Spleen (tissue), 13 donors: ENCODE measurements at regions of chr12 and their contacts with region 1.

Region 1: DNA sequence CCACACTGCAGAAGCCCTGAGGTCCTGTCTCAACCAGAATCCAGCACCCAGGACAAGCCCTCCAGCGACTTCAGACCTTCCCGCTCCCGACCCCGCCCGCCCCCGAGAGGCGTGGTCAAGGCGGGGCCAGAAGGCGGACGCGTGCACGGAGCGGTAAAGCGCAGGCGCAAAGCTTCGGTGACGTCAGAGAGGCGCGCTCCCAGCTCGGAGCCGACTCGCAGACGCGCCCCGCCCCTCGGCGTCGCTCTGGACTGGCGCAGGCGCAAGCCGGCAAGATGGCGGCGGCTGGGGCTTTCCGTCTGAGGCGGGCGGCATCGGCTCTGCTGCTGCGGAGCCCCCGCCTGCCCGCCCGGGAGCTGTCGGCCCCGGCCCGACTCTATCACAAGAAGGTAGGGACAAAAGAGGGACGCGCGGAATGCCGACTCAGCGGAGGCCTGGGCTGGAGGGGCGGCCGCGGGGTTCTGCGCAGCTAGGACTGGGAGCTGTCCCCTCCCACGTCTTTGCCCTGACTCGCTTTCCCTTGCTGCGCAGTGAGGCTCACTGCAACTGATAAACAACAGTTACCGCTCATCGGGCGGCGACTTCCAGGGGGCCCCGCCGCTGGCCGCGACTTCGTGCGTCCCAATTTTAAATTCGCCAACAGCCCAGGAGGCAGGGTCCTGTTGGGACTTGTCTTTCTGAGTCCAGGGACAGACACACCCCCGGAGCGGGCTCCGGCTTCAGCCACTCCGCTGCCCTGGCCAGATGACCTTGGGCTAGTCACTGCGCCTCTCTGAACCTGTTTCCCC is at the start of gene ISCU:
- DNase-seq: peak; percentile 100
- H3K4me3 ChIP-seq: peak within 1 kb of the TSS; percentile 67 to 99 (median 92)
- H3K27ac ChIP-seq: peak within 1 kb of the TSS; percentile 90 to 98 (median 94)
- H3K4me1 ChIP-seq: peaks cover 61 to 89% (median 79%) of the 10 kb centered on the region in 6 donors
- H3K27me3 ChIP-seq: no peaks in the 10 kb centered on the region
- CTCF ChIP-seq: peak in 5 of 11 experiments; percentile 11 to 42 (median 22)
- POLR2A ChIP-seq: peak; percentile 73 to 90 (median 76)
- total RNA-seq, gene ISCU: 98.9 to 220 (median 144) TPM

Region 2: DNA sequence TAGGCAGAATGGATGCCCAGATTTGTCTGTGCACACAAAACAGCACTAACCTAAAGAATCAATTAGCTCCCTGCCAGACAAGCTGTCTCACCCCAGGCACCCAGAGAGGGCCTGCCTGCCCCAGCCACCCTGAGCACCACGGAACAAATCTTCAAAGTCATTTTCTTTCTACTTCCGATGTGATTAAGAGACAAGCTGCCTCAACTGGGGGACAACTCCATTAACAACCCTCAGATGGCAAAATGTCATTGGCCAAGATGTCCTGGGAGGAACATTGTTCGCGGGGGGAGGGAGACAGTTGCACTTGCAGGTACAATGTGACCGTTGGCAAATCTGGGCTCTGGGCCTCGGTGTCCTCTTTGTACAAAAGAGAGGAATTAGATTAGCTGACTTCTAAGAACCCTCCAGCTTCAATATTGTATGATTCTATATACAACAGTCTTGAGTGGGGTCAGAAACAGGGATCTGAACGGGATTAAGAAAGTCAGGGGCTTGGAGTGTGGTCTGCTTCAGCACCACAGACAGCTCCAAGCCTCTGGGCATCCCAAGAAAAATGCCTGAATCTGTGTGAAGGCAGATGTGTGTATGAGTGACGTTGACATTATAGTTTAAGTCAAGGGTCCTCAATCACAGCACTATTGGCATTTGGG is 180.6 kb before region 1 on chr12:
- intact Hi-C with region 1: no loop called
- DNase-seq: no peak
- H3K4me3 ChIP-seq: no peak overlapping the region
- H3K27ac ChIP-seq: no peak overlapping the region
- H3K4me1 ChIP-seq: no peaks in the 10 kb centered on the region
- H3K27me3 ChIP-seq: peaks cover 0 to 16% (median 0%) of the 10 kb centered on the region in 7 donors
- CTCF ChIP-seq: no peak
- POLR2A ChIP-seq: no peak

Region 3: DNA sequence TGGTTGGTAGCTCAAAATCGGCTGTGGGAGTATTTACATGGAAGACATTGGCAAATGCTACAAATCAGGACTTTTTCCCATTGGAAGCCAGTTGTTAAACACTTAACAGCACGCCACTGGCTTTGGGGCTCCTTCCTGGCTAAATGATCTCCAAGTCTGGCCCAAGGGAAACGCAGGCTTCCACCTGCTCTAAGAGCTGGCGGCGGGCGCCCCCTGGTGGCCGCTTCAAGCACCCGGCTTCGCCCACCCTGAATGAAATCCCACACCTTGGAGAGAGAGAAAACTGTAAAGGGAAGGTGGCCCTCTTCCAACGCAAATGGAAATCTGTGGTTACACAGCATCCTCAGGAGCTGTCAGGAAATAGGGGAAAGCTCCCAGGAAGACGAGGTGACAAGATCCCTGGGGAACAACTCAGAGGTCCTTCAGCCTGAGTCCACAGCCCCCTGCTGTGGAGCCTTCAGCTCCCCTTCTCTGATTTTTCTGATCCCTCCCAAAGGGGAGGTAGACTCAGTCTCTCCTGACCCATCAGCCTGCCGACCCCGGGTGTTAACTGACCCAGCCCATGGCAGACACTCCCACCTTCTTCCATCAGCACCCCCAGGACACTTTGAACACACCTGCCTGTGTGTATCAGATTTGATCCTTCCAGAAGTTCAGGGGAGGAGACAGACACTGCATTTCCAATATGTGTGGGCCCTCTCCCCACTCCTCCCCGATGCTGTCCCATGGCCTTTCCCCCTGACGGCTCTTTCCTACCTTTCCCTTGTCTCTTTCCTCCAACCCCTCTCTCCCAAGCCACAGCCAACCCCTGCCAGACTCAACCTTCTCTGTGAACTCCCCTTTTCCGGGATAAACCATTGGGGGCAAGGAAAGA is 55.8 kb after region 1 on chr12:
- intact Hi-C with region 1: loop called (anchors 2 kb)
- DNase-seq: peak; percentile 94
- H3K4me3 ChIP-seq: no peak overlapping the region
- H3K27ac ChIP-seq: peak overlapping the region in 5 of 8 donors; percentile 44 to 78 (median 70)
- H3K4me1 ChIP-seq: peaks cover 30 to 85% (median 64%) of the 10 kb centered on the region in 6 donors
- H3K27me3 ChIP-seq: no peaks in the 10 kb centered on the region
- CTCF ChIP-seq: peak; percentile 80 to 99 (median 95)
- POLR2A ChIP-seq: no peak

Region 4: DNA sequence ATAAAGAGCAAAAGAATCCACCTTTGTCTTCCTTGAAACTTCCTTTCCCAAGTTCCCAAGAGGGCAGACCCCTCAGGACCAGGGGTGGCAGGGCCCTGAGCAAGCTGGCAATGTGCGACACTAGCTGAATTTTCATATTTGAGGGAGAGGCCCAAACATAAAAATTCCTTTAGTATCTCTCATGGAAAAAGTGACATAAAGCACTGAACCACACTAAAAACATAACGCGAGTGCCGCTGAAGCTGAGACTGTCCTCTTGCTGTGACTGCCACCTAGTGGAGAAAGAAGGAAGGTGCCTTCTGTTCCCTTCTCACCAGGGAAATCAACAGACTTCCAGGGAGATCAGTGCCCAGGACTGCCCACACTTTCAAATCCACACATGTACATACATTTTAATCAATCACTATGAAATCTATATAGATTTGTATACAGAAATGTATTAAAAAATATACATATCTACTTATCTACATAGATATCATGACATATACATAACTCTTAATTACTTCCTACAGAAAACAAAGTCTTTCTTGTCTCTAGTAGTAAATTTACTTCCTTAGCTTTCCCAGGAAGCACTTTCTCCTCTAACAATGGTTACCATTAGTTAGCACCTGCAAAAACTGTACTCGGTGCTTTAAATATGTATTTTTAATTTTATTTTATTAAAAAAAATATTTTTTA is 241.0 kb after region 1 on chr12:
- intact Hi-C with region 1: loop called (anchors 5 kb)
- DNase-seq: peak; percentile 78
- H3K4me3 ChIP-seq: no peak overlapping the region
- H3K27ac ChIP-seq: peak overlapping the region; percentile 48 to 79 (median 72)
- H3K4me1 ChIP-seq: peaks cover 10 to 47% (median 34%) of the 10 kb centered on the region in 6 donors
- H3K27me3 ChIP-seq: no peaks in the 10 kb centered on the region
- CTCF ChIP-seq: peak; percentile 91 to 97 (median 95)
- POLR2A ChIP-seq: no peak

Region 5: DNA sequence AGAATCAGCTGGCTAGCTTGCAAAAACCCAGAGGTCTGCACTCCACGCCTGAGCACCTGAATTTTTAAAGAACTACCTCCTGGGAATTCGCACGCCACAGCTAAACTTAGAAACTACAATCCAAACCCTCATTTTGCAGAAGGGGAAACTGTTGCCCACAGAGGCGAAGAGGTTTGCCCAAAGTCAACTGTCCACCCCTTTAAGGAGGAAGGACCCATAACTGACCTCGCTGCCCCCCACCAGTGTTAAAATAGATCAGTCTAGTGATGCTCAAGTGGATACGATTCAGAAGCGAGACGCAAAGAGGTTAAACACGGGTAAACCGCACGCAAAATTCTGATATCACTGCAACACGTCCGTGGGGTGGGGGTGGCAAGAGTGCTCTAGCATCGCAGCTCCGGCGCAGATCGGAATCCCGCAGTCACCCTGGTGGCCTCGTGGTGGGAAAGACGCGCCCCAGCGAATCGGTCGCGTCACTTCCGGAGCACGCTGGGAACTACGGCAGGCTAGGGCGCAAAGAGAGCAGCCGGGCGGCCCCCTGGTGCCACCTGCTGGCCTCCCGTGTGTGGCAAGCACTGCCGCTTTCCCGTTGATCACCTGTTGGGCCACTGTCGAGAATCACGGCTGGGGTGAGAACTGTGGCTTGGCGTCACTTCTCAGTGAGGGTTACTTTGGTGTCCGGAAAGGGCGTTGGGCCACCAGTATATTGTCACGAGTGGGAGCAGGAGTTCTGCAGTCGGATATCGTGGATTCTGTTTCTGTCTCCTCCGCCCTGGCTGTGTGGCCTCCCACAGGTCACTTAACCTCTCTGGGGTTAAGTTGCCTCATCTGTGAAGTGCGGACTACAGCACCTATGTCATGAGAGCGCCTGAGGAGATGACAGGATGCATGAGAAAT is 530.7 kb after region 1 on chr12 and contains the start of gene ALKBH2:
- intact Hi-C with region 1: loop called (anchors 10 kb)
- DNase-seq: peak; percentile 99
- H3K4me3 ChIP-seq: peak within 1 kb of the TSS; percentile 24 to 74 (median 46)
- H3K27ac ChIP-seq: peak within 1 kb of the TSS in 7 of 8 donors; percentile 9 to 84 (median 76)
- H3K4me1 ChIP-seq: peaks cover 22 to 54% (median 34%) of the 10 kb centered on the region in 6 donors
- H3K27me3 ChIP-seq: peaks cover 0 to 8% (median 0%) of the 10 kb centered on the region in 7 donors
- CTCF ChIP-seq: peak; percentile 90 to 99 (median 98)
- POLR2A ChIP-seq: peak in 1 of 3 donors; percentile 30
- total RNA-seq, gene ALKBH2: 8.6 to 18.8 (median 12.3) TPM